Vagina (tissue), 2 donors: ENCODE measurements at regions of chr15 and their contacts with region 1.

Region 1: DNA sequence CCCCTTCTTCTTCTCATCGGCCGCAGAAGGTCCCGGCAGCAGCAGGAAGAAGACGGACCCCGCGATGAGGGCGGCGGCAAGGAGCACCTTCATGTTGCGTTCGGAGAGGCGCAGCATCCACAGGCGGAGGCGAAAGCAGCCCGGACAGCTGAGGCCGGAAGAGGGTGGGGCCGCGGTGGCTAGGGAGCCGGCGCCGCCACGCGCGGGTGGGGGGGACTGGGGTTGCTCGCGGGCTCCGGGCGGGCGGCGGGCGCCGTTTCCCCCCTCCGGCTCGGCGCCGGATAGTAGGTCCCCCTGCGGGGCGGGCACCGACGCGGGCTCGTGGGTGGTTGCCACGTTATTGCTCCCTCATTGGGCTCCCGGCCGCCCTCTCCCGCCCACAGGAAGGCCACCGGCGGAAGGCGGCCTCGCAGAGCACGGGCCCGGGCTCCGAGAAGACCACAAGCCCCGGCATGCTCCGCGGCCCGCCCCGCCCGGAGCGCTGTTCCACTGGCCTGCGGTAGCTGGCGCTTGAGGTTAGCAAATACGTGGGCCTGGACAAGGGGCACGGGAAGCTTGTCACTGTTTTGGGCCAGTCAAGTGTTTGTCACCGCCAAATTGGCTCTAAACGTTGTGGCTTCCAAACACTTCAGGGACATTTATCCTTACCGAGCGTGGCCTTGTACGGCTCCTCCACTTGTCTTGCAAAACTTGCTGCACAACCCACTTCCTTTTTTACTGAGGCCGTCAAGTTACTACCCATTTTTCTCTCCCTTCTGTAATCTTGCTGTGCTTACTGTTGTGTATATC is at the start of gene PPIB:
- DNase-seq: peak in 1 of 2 donors; percentile 97
- H3K4me3 ChIP-seq: peak within 1 kb of the TSS; percentile 75 to 78
- H3K27ac ChIP-seq: peak within 1 kb of the TSS; percentile 74
- H3K4me1 ChIP-seq: peaks cover 42% of the 10 kb centered on the region
- H3K27me3 ChIP-seq: no peaks in the 10 kb centered on the region
- CTCF ChIP-seq: peak in 2 of 3 experiments; percentile 12 to 17
- POLR2A ChIP-seq: peak in 1 of 2 donors; percentile 69
- total RNA-seq, gene PPIB: 451 TPM

Region 2: DNA sequence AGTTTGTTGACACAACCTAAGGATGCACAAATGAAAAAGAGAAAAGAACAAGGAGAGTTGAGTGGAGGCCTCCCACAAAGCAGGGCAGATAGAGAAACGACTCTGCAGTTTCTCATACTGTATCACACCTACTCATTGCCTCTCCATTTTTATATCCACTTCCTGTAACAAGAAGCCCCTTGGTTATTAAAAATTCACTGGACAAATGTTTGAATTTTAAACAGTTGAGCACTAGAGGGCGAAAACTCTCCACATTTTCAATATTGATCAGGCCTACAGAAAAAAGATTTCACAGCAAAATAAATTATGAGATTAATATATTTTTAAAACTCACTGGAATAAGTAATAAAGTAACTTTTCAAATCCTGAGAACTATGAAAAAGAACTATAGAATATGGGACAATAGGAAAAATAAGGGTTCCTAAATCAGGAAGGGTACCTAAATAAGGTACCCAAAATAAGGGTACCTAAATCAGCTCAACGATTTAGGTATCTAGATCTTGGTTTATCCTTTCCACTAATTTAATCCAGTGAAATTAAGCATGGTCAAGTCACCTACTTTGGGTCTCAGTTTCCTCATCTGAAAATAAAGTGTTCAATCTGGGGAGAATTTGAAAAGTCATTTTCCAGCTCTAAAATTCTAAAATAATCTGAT is 46.7 kb after region 1 on chr15:
- intact Hi-C with region 1: no loop called
- DNase-seq: no peak
- H3K4me3 ChIP-seq: no peak overlapping the region
- H3K27ac ChIP-seq: no peak overlapping the region
- H3K4me1 ChIP-seq: no peaks in the 10 kb centered on the region
- H3K27me3 ChIP-seq: no peaks in the 10 kb centered on the region
- CTCF ChIP-seq: peak; percentile 4 to 29 (median 21)
- POLR2A ChIP-seq: no peak

Region 3: DNA sequence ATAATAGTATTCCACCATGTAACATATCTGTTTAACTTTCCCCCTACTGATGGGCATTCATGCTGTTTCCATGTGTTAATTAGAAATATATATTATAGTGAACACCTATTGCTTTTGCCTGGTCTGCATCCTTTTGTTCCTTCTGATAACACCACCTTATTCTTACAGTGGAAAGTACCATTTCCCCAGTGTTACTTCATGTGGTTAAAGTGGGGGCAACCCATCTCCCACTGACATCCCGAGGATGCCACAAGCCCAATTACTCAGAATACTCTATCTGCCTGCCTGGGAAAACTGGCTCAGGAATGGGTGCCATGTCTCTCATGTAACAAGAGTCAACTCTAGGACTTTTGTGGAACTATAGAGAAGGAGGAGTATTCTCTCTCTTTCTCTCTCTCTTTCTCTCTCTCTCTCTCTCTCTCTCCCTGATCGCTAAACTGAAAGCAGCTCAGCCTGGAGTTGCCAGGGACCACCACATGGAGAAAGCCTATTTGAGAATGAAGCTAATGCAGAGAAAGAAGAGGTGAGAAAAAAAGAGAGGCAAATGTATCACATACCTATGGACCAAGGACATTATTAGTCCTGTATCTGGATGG is 66.2 kb after region 1 on chr15:
- intact Hi-C with region 1: loop called (anchors 2 kb)
- DNase-seq: no peak
- H3K4me3 ChIP-seq: no peak overlapping the region
- H3K27ac ChIP-seq: no peak overlapping the region
- H3K4me1 ChIP-seq: peaks cover under 1% of the 10 kb centered on the region
- H3K27me3 ChIP-seq: no peaks in the 10 kb centered on the region
- CTCF ChIP-seq: no peak
- POLR2A ChIP-seq: no peak

Region 4: DNA sequence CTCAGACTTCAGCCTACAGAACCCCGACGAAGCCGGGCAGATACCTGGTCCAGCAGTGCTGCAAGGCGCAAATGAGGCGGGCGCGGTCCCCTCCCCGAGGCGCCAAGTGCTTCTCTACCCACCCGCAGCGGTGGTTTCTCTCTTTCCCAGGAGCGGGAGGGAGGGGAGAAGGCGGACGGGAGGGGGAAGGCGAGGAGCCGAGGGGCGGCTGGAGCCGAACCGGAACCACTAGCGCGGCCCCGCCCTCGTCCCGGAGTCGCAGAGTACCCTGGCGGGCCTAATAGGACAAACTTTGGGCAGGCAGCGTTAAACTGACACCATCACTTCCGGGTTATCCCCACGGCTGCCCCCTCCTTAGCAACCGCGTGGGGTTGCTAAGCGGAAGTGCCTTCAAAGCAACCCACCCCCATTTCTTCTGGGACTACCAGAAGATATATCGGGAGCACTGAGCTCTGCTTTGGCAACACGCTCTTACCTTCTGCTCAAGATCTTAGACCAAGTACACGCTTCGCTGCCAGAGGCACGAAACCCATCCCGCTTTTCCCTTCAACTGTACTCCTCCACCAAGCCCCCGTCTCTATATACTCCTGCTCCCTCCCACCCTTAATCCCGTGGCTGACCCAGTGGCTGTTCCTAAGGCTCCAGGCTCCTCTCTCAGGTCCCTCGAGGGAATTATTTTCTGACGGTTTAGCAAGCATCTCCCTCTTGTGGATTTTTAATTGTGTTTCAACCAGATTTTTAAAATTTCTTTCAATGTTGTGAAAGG is 193.1 kb after region 1 on chr15 and contains the start of gene CSNK1G1:
- intact Hi-C with region 1: loop called (anchors 10 kb)
- DNase-seq: peak in 1 of 2 donors; percentile 97
- H3K4me3 ChIP-seq: peak within 1 kb of the TSS; percentile 70 to 78
- H3K27ac ChIP-seq: peak within 1 kb of the TSS; percentile 77
- H3K4me1 ChIP-seq: peaks cover 21% of the 10 kb centered on the region
- H3K27me3 ChIP-seq: no peaks in the 10 kb centered on the region
- CTCF ChIP-seq: peak; percentile 14 to 47 (median 21)
- POLR2A ChIP-seq: no peak
- total RNA-seq, gene CSNK1G1: 12.8 TPM

Region 5: GRCh38 chr15:64387562-64388168 is 224.6 kb after region 1 on chr15 and contains the start of gene TRIP4:
- intact Hi-C with region 1: no loop called
- DNase-seq: peak; percentile 95 to 97
- H3K4me3 ChIP-seq: peak within 1 kb of the TSS; percentile 64 to 75
- H3K27ac ChIP-seq: peak within 1 kb of the TSS; percentile 56
- H3K4me1 ChIP-seq: peaks cover 13% of the 10 kb centered on the region
- H3K27me3 ChIP-seq: no peaks in the 10 kb centered on the region
- CTCF ChIP-seq: no peak
- POLR2A ChIP-seq: peak in 1 of 2 donors; percentile 27
- total RNA-seq, gene TRIP4: 22.3 TPM